PC-9 (cell line): ENCODE measurements at regions of chr5 and their contacts with region 1.

Region 1: DNA sequence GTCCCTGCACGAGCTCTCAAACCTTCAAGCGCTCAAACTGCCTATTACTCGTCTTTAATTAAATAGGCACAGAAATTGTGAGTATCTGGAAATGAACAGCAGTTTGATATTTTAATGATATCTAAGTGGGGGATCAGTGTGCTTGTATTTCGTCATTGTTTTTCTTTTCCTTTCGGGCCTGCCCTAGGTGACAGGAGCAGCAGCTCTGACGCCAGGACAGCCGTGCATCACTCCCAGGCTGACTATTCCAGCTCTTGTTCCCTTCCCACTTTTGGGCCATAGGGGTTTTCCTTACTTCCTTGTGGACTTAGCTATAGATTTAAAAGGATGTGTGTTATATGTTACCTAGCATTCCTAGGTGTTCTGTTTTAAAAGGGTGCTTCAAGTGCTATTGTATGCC is 9.5 kb downstream of the BNIP1 start:
- DNase-seq: no peak
- H3K4me3 ChIP-seq: no peak overlapping the region
- H3K27ac ChIP-seq: peak overlapping the region; percentile 61
- H3K4me1 ChIP-seq: 0 out of 2 replicates have a peak, but pooled peaks cover 8% of the 10 kb centered on the region
- H3K27me3 ChIP-seq: no peaks in the 10 kb centered on the region
- CTCF ChIP-seq: no peak

Region 2: DNA sequence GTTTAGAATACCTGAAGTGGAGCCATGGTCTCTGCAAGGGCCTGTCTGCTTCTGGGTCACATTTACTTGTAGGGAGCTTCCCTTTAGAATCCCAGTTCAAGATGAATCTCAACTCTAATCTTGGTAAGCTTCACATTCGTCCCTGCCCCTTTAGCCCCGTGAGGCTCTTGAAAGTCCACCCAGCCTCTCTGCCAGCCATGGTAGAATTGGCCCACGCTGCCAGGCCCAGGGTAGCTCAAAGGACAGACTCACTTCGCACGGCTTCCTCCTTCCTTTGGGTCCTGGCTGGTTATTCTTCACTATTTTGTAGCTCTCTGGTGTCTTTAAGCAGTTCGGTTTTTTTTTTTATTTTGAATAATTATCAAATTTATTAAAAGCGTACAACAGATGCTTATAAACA is 109.7 kb after region 1 on chr5:
- CTCF ChIA-PET with region 1: interaction called, 10 read pairs
- POLR2A ChIA-PET with region 1: no interaction called
- intact Hi-C with region 1: no loop called
- DNase-seq: no peak
- H3K4me3 ChIP-seq: no peak overlapping the region
- H3K27ac ChIP-seq: no peak overlapping the region
- H3K4me1 ChIP-seq: no peaks in the 10 kb centered on the region
- H3K27me3 ChIP-seq: peaks cover 14% of the 10 kb centered on the region
- CTCF ChIP-seq: no peak